Posterior cingulate gyrus (tissue), 11 donors: ENCODE measurements at regions of chr17 and their contacts with region 1.

Region 1: GRCh38 chr17:81294856-81295680 is at the start of gene SLC38A10:
- DNase-seq: peak; percentile 87 to 99 (median 93)

Region 2: DNA sequence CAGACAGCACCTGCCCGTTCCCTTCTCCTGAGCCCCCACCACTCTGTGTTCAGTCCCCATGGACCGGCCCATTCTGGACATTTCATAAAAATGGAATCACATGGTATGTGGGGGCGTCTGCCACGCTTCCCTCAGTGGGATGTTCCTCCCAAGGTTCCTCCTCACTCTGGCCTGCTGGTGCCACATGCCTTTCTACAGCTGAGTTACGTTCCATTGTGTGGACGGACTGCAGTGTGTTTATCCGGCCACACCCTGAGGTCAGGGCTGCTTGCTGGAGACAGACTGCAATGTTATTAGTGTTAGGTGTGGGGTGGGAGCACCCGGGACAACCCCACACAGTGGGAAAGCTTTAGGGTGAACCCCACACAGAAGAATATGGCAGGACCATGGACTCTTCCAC is 123.1 kb before region 1 on chr17:
- intact Hi-C with region 1: no loop called
- DNase-seq: peak in 1 of 10 donors; percentile 28

Region 3: GRCh38 chr17:81401723-81402529 is 106.9 kb after region 1 on chr17:
- intact Hi-C with region 1: loop called (anchors 5 kb)
- DNase-seq: peak in 4 of 10 donors; percentile 58 to 94 (median 72)